Activated naive CD4-positive, alpha-beta T cell treated with anti-CD3 and anti-CD28 coated beads, Interleukin-2, amount 10 ng/mL, durations not matched to agents 7 days and 5 days (primary cell): ENCODE measurements at regions of chr16 and their contacts with region 1.

Region 1: DNA sequence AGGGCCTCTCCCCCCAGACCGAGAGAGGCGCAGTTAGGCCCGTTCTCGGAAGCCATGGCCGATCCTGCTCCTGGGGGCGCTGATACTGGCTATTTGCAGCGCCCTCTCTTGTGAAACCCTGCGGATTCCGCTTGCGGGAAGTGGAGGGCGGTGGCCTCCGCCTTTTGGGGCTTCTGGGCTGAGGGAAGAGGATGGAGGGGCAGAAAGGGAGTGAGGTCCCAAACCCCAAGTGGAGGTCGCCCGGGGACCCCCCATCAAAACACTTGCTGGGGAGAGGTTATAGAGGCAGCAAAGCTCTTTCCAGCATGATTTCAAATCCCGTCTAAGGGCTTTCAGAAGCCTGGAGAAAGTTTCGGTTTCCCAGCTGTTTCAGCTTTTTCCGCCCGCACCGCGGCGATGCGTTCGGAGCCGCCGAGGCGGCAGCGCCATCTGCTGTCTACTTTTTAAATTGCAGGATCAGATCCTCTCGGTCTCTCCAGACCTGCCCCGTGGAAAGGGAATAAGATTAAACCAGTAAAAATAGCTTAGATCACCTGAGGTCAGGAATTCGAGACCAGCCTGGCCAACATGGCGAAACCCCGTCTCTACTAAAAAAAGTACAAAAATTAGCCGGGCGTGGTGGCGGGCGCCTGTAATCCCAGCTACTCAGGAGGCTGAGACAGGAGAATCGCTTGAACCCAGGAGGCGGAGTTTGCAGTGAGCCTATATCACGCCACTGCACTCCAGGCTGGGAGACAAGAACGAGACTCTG is 15.8 kb downstream of the SNX20 start:
- DNase-seq: peak; percentile 88
- H3K4me3 Mint-ChIP-seq: peak overlapping the region; percentile 58
- H3K27ac Mint-ChIP-seq: peak overlapping the region; percentile 81
- H3K4me1 Mint-ChIP-seq: peaks cover 47% of the 10 kb centered on the region
- H3K27me3 Mint-ChIP-seq: peaks cover 6% of the 10 kb centered on the region

Region 2: DNA sequence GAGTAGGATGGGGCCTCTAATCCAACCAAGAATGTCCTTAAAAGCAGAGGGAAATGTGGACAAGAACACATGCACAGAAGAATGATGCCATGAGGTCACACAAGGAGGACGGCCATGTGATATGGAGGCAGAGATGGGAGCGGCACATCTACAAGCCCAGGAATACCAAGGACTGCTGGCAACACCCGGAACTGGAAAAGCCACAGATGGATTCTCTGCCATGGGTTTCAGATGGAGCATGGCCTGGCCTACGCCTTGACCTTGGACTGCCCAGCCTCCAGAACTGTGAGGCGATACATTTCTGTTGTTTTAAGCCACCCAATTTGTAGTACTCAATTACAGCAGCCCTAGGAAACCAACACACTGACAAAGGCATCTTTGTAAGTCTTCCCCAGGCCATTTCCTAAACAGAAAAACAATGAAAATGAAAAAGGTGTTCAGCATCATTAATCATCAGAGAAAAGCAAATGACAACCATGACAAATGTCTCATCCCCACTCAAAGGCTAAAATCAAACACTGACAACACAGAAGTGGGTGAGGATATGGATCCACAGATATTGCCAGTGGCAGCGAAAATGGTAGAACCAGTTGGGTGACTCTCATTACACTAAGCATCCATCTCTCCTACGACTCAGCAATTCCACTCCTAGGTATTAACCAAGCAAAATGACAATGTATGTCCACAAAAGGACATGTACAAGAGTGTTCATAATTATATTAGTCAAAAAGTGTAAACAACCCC is 717.2 kb before region 1 on chr16:
- CTCF ChIA-PET with region 1: no interaction called
- DNase-seq: no peak
- H3K4me3 Mint-ChIP-seq: no peak overlapping the region
- H3K27ac Mint-ChIP-seq: no peak overlapping the region
- H3K4me1 Mint-ChIP-seq: no peaks in the 10 kb centered on the region
- H3K27me3 Mint-ChIP-seq: peaks cover 13% of the 10 kb centered on the region

Region 3: DNA sequence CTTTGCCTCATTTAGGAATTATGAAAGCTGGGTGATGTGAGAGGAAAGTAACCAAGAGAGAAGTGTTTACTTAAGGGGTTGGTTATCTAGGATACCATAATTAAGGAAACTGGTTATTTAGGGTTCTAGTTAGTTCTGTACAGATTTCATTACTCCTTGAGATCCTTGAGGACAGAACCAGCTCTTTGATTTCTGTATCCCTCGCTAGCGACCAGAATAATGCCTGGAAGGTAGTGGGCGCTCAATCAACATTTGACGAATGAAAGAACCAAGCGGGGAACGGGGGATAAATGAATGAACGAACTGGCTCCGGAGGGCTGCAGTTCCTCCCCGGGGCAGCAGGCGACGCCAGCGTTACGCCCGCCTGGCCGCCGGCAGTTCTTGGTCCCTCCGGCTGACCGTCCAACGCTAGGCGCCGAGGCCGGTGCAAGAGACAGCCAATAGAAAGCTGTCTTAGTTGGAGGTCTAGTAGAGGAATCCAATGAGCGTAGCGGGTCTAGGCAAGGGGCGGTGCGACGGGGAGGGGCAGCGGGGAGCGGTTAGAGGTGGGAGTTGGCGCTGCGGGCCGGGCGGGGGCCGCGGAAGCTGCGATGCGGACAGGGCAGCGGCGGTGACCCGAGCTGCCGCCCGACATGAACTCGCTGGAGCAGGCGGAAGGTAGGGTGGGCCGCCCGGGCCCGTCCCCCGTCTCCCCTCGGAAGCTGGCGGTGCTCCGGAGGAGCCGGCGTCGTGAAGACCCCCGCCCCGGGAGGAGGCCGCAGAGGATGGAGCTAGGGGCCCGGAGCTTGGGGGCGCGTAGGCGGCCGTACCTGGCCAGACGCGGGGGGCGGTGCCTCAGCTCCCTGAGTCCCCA is 640.4 kb before region 1 on chr16 and contains the start of gene CNEP1R1:
- CTCF ChIA-PET with region 1: interaction called, 11 read pairs
- DNase-seq: peak; percentile 94
- H3K4me3 Mint-ChIP-seq: peak within 1 kb of the TSS; percentile 88
- H3K27ac Mint-ChIP-seq: peak within 1 kb of the TSS; percentile 92
- H3K4me1 Mint-ChIP-seq: peaks cover 24% of the 10 kb centered on the region
- H3K27me3 Mint-ChIP-seq: no peaks in the 10 kb centered on the region

Region 4: GRCh38 chr16:50326949-50327402 is 338.3 kb before region 1 on chr16:
- CTCF ChIA-PET with region 1: interaction called, 52 read pairs
- DNase-seq: peak; percentile 85
- H3K4me3 Mint-ChIP-seq: no peak overlapping the region
- H3K27ac Mint-ChIP-seq: peak overlapping the region; percentile 90
- H3K4me1 Mint-ChIP-seq: peaks cover 67% of the 10 kb centered on the region
- H3K27me3 Mint-ChIP-seq: no peaks in the 10 kb centered on the region

Region 5: GRCh38 chr16:50509521-50510341 is 155.6 kb before region 1 on chr16:
- CTCF ChIA-PET with region 1: interaction called, 18 read pairs
- DNase-seq: peak; percentile 58
- H3K4me3 Mint-ChIP-seq: no peak overlapping the region
- H3K27ac Mint-ChIP-seq: no peak overlapping the region
- H3K4me1 Mint-ChIP-seq: no peaks in the 10 kb centered on the region
- H3K27me3 Mint-ChIP-seq: peaks cover 6% of the 10 kb centered on the region

Region 6: GRCh38 chr16:50731130-50731988 is 66.1 kb after region 1 on chr16:
- CTCF ChIA-PET with region 1: interaction called, 18 read pairs
- DNase-seq: peak; percentile 59
- H3K4me3 Mint-ChIP-seq: peak overlapping the region; percentile 30
- H3K27ac Mint-ChIP-seq: peak overlapping the region; percentile 90
- H3K4me1 Mint-ChIP-seq: peaks cover 20% of the 10 kb centered on the region
- H3K27me3 Mint-ChIP-seq: peaks cover 4% of the 10 kb centered on the region

Region 7: DNA sequence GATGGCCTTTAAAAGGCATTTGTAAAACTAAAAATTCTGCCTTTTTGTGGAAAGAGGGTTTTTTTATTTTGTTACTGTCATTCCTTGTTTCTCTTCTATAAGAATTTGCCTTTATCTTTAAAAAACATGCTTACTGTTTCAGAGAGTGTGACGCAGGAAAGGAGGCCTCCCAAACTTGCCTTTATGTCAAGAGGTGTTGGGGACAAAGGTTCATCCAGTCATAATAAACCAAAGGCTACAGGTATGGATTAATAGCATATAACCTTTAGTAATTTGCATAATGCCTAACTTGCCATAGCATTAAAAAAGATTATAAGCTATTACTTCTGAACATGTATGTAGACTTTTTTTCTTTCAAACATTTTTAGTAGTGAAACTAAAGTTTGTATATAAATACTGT is 110.7 kb after region 1 on chr16:
- CTCF ChIA-PET with region 1: interaction called, 11 read pairs
- DNase-seq: no peak
- H3K4me3 Mint-ChIP-seq: no peak overlapping the region
- H3K27ac Mint-ChIP-seq: no peak overlapping the region
- H3K4me1 Mint-ChIP-seq: peaks cover 36% of the 10 kb centered on the region
- H3K27me3 Mint-ChIP-seq: no peaks in the 10 kb centered on the region

Region 8: GRCh38 chr16:50996830-50997186 is 331.5 kb after region 1 on chr16:
- CTCF ChIA-PET with region 1: no interaction called
- DNase-seq: no peak
- H3K4me3 Mint-ChIP-seq: no peak overlapping the region
- H3K27ac Mint-ChIP-seq: no peak overlapping the region
- H3K4me1 Mint-ChIP-seq: no peaks in the 10 kb centered on the region
- H3K27me3 Mint-ChIP-seq: no peaks in the 10 kb centered on the region